MCF 10A (cell line): ENCODE measurements at regions of chr4 and their contacts with region 1.

Region 1: GRCh38 chr4:129362674-129363274 is 266.8 kb downstream of the C4orf33 start:
- DNase-seq: peak; percentile 87
- H3K4me3 Mint-ChIP-seq: no peak overlapping the region
- H3K27ac Mint-ChIP-seq: no peak overlapping the region
- H3K4me1 Mint-ChIP-seq: peaks cover 12% of the 10 kb centered on the region
- H3K27me3 Mint-ChIP-seq: no peaks in the 10 kb centered on the region
- CTCF ChIP-seq: peak; percentile 78

Region 2: DNA sequence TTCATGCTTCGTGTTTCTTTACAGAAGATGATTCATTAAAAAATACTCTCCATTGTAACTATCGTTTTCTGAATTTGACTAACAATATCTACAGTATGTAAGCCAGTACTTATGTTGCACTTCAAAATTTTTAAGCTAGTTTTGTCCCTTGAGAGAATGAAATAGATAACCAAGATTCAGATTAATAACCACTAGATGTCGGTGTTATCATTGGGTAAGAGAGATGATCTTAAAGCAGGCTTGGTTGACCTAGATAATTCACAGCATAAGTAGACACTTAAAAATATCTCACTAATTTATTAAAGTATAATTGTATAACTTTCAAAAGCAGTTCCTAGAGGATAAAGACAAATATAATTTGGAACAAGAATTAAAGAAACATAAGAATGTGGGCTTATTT is 164.0 kb after region 1 on chr4:
- CTCF ChIA-PET with region 1: interaction called, 7 read pairs
- POLR2A ChIA-PET with region 1: no interaction called
- intact Hi-C with region 1: loop called (anchors 2 kb)
- DNase-seq: peak; percentile 54
- H3K4me3 Mint-ChIP-seq: no peak overlapping the region
- H3K27ac Mint-ChIP-seq: no peak overlapping the region
- H3K4me1 Mint-ChIP-seq: no peaks in the 10 kb centered on the region
- H3K27me3 Mint-ChIP-seq: no peaks in the 10 kb centered on the region
- CTCF ChIP-seq: peak; percentile 55

Region 3: GRCh38 chr4:129929052-129929451 is 566.3 kb after region 1 on chr4:
- CTCF ChIA-PET with region 1: interaction called, 4 read pairs
- POLR2A ChIA-PET with region 1: no interaction called
- intact Hi-C with region 1: loop called (anchors 5 kb)
- DNase-seq: peak; percentile 18
- H3K4me3 Mint-ChIP-seq: no peak overlapping the region
- H3K27ac Mint-ChIP-seq: no peak overlapping the region
- H3K4me1 Mint-ChIP-seq: no peaks in the 10 kb centered on the region
- H3K27me3 Mint-ChIP-seq: no peaks in the 10 kb centered on the region
- CTCF ChIP-seq: no peak